ENCODE measurements at regions of chr17 and their contacts with region 1.

Region 1: GRCh38 chr17:4412933-4413831 is 20.6 kb upstream of the SPNS3 start:
- DNase-seq: peak; percentile 96
- H3K4me3 Mint-ChIP-seq: peak overlapping the region; percentile 45
- H3K27ac Mint-ChIP-seq: no peak overlapping the region
- H3K4me1 Mint-ChIP-seq: peaks cover 5% of the 10 kb centered on the region
- H3K27me3 Mint-ChIP-seq: no peaks in the 10 kb centered on the region

Region 2: DNA sequence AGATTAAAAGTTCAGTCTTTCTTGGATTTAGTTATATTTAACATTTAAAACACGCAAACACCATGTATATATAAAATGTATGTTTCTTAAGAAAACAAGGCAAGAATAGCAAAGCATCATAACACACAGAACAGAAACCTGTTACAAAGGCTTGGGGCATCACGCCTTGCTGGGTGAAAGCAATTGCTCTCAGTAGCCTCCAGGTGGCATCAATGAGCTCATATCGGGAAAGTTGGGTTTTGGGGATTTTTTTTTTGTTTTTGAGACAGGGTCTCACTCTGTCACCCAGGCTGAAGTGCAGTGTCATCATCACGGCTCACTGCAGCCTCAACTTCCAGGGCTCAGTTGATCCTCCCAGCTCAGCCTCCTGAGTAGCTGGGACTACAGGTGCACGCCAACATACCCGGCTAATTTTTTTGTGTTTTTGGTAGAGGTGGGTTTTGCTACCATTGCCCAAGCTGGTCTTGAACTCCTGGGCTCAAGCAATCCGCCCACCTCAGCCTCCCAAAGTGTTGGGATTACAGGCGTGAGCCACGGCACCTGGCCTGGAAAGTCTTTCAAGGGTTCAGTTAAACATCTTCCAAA is 213.3 kb before region 1 on chr17:
- CTCF ChIA-PET with region 1: interaction called, 6 read pairs
- intact Hi-C with region 1: loop called (anchors 1 kb)
- DNase-seq: peak; percentile 62
- H3K4me3 Mint-ChIP-seq: no peak overlapping the region
- H3K27ac Mint-ChIP-seq: no peak overlapping the region
- H3K4me1 Mint-ChIP-seq: peaks cover 9% of the 10 kb centered on the region
- H3K27me3 Mint-ChIP-seq: no peaks in the 10 kb centered on the region

Region 3: DNA sequence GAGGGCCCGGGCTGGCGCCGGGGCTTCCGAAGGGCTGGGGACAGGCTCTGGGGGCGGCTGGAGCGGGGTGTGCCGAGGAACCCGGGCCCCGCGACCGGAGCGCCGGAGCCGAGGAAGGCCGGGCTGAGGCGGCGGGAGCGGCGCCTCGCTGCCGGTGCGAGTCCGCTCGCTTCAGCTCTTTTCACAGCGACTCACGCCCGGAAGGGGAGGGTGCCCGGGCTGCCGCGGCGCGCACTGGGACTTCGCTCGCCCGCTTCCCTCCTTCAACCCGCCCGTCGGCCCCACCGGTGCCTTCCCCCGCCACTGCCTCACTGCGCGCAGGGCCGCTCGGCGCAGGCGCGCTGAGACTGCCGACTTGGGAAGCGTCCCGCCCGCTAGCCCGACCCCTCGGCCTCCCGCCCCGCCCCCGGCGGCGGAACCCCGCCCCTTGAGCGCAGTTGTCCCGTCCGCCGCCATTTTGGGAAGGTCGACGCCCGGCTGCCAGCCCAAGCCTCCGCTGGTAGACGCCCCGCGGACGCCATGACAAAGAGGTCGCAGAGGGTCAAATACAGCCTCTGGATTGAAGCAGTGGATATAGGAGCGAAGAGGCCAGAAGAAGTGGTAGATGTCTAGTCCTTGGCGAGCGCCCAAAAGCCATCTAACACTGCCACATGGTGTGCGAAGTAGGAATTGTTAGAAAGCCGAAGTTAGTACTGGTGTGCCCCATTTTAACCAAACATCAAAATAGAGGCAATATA is 46.7 kb before region 1 on chr17 and contains the start of gene UBE2G1:
- CTCF ChIA-PET with region 1: no interaction called
- intact Hi-C with region 1: loop called (anchors 1 kb)
- DNase-seq: peak; percentile 99
- H3K4me3 Mint-ChIP-seq: peak within 1 kb of the TSS; percentile 71
- H3K27ac Mint-ChIP-seq: peak within 1 kb of the TSS; percentile 81
- H3K4me1 Mint-ChIP-seq: peaks cover 31% of the 10 kb centered on the region
- H3K27me3 Mint-ChIP-seq: no peaks in the 10 kb centered on the region
- total RNA-seq, gene UBE2G1: 33.3 to 36.1 TPM

Region 4: GRCh38 chr17:4733073-4733531 is 319.9 kb after region 1 on chr17:
- CTCF ChIA-PET with region 1: no interaction called
- intact Hi-C with region 1: no loop called
- DNase-seq: peak; percentile 39
- H3K4me3 Mint-ChIP-seq: no peak overlapping the region
- H3K27ac Mint-ChIP-seq: no peak overlapping the region
- H3K4me1 Mint-ChIP-seq: peaks cover 32% of the 10 kb centered on the region
- H3K27me3 Mint-ChIP-seq: peaks cover 1% of the 10 kb centered on the region

Measured in activated naive CD4-positive, alpha-beta T cell treated with anti-CD3 and anti-CD28 coated beads for 36 hours (primary cell).